ENCODE measurements at regions of chr17 and their contacts with region 1.

Region 1: DNA sequence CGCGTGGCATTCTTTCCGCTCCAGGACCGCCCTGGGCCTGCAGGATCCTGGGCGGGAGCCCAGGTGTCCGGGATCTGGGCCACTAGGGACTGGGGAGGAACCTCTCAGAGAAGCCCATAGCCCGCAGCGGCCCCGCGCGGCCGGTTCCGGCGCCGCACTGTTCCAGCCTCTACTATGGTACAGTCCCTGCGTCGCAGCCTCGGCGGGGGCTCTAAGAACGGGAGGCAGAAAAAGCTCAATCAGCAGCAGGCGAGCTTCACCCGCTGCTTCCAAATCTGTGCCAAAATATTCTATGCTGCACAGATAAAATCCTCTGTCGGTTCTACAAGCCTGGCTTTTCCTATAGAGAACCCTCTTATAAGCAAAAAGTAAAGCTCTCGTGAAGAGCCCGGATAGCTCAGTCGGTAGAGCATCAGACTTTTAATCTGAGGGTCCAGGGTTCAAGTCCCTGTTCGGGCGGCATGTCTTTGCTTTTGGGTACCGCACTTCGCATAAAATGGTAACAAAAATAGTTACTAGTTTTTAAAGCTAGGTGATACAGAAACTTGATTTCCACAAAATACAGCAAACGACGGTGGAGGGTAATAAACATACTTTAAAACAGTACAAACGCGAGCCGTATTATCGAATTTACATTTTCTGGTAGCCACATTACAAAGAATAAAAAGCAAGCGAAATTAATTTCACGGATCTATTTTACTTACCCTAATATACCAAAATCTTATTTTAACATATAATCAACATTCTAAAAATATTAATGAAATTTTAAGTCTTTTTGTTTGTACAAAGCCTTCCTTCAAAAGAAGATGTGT is 661 bp upstream of the ALOXE3 start:
- DNase-seq: peak; percentile 92
- ATAC-seq: peak; percentile 69
- H3K4me3 Mint-ChIP-seq: peak overlapping the region; percentile 95
- H3K27ac Mint-ChIP-seq: peak overlapping the region; percentile 88
- H3K4me1 Mint-ChIP-seq: peaks cover 48% of the 10 kb centered on the region
- H3K27me3 Mint-ChIP-seq: peaks cover 59% of the 10 kb centered on the region

Region 2: GRCh38 chr17:8079291-8080207 is 39.4 kb before region 1 on chr17:
- CTCF ChIA-PET with region 1: interaction called, 40 read pairs
- DNase-seq: peak; percentile 85
- ATAC-seq: peak; percentile 86
- H3K4me3 Mint-ChIP-seq: peak overlapping the region; percentile 87
- H3K27ac Mint-ChIP-seq: peak overlapping the region; percentile 81
- H3K4me1 Mint-ChIP-seq: peaks cover 12% of the 10 kb centered on the region
- H3K27me3 Mint-ChIP-seq: peaks cover 20% of the 10 kb centered on the region

Region 3: DNA sequence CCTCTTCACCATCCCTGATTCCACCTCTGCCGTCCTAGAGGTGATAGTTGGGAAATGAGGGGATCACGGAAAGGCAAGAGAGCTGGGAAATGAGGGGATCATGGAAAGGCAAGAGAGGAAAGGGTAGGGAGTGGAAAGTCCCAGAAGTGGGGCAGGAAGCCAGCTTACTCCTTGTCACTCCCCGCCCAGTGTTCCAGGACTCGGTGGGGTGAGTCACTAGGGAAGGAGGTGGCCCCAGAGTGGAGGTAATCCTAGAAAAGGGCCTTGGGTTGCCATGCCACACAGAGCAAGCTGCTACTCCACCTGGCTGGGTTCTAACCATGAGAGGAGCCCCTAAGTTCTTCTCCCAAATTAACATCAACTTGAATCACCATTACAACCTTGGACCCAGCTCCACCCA is 15.4 kb before region 1 on chr17:
- CTCF ChIA-PET with region 1: interaction called, 33 read pairs
- DNase-seq: no peak
- ATAC-seq: no peak
- H3K4me3 Mint-ChIP-seq: no peak overlapping the region
- H3K27ac Mint-ChIP-seq: no peak overlapping the region
- H3K4me1 Mint-ChIP-seq: peaks cover 6% of the 10 kb centered on the region
- H3K27me3 Mint-ChIP-seq: no peaks in the 10 kb centered on the region

Region 4: GRCh38 chr17:8156246-8156992 is 37.4 kb after region 1 on chr17:
- CTCF ChIA-PET with region 1: interaction called, 57 read pairs
- DNase-seq: peak; percentile 100
- ATAC-seq: peak; percentile 79
- H3K4me3 Mint-ChIP-seq: no peak overlapping the region
- H3K27ac Mint-ChIP-seq: no peak overlapping the region
- H3K4me1 Mint-ChIP-seq: peaks cover 43% of the 10 kb centered on the region
- H3K27me3 Mint-ChIP-seq: no peaks in the 10 kb centered on the region

Region 5: DNA sequence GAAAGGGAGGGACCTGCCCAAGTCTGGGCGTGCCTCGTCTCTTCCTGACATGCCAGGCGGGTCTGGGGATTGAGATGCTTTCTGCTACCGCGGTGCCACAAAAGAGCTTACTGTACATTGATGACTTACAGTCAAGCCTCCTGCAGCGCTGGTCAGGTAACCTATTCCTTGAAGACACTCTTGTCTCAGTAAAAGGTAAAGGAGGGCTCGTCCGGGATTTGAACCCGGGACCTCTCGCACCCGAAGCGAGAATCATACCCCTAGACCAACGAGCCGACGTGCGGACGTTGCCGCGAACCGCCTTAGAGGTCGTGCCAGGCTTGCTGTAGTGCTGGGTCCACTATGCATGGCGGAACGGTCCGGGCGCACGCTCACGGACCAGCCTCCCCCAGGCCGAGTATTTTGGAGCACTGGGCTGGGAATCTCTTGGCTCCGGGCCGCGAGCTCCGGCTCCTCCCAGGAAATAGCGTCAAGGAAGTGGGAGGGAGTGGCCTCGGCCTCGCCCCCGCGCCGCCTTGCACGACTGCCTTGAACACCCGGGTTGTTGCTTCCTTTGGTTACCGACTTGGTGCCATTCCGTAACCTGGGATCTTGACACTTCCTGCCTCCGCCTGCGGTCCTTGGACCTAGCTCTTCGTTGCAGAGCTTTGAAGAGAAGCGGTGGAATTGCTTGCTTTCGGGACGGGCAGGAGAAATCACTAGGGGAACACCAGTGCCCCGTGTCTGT is 103.8 kb after region 1 on chr17:
- CTCF ChIA-PET with region 1: interaction called, 40 read pairs
- DNase-seq: peak; percentile 94
- ATAC-seq: peak; percentile 52
- H3K4me3 Mint-ChIP-seq: peak overlapping the region; percentile 95
- H3K27ac Mint-ChIP-seq: peak overlapping the region; percentile 97
- H3K4me1 Mint-ChIP-seq: peaks cover 51% of the 10 kb centered on the region
- H3K27me3 Mint-ChIP-seq: no peaks in the 10 kb centered on the region

Region 6: DNA sequence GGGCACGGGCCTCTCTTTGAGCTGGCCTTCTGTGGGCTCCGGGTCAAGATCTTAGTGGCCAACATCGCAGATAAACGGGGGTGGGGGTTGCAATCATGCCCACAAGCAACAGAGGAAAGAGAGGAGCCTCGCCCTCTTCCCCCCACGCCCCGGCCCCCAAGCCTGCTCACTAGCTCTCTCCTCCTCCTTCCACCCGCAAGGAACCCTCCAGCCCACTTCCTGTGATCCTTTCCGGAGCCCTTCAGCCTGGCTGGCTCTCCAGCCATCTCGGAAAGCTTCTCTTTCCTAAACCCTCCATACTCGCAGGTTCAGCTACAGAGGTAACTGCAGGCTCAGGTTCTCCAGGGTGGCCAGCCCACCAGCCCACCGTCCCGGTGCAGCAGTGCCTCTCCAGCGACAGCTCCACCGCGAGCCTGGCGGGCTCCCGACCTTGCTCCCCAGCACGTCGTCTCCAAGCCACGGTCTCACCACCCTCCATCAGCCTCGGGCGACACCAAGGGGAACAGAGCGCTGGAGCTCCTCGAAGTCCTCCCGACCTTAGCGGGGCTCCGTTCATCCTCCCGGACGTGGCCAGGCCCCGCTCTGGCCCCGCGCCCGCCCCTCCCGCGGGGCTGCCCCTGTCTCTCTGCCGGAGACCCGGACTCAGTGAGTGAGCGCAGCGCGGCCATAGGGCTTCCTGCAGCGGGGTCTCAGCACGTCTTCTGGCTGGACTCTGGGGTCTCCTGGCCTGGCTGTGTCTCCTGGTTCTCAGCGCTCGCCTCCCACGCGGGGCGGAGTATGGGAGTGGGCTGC is 207.7 kb after region 1 on chr17:
- CTCF ChIA-PET with region 1: interaction called, 12 read pairs
- DNase-seq: peak; percentile 47
- ATAC-seq: peak; percentile 70
- H3K4me3 Mint-ChIP-seq: peak overlapping the region; percentile 56
- H3K27ac Mint-ChIP-seq: no peak overlapping the region
- H3K4me1 Mint-ChIP-seq: peaks cover 13% of the 10 kb centered on the region
- H3K27me3 Mint-ChIP-seq: peaks cover 40% of the 10 kb centered on the region

Measured in activated CD8-positive, alpha-beta memory T cell treated with anti-CD3 and anti-CD28 coated beads, Interleukin-2, amount 10 ng/mL, durations not matched to agents 7 days and 5 days (primary cell).